MCF 10A (cell line): ENCODE measurements at regions of chr1 and their contacts with region 1.

Region 1: DNA sequence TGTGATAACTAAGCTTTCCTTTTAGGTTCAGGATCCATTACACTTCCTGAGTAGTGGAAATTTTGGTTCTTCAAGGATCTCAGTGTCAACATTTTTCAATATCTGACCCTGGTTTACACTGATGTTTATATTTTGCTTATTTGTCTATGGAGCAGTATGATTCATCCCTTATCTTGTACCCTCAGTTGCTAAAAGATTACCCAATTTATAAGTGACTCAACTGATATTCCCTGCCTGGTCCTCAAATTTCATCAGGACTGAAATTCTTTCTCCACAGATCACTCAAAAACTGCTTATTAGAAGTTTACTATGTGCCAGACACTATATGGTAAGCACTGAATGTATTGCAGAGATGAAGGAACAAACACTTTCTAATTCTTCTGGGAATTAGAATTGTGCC is 139.1 kb upstream of the CHRM3 start:
- DNase-seq: peak; percentile 66
- H3K4me3 Mint-ChIP-seq: no peak overlapping the region
- H3K27ac Mint-ChIP-seq: peak overlapping the region; percentile 14
- H3K4me1 Mint-ChIP-seq: peaks cover 14% of the 10 kb centered on the region
- H3K27me3 Mint-ChIP-seq: no peaks in the 10 kb centered on the region
- CTCF ChIP-seq: no peak

Region 2: DNA sequence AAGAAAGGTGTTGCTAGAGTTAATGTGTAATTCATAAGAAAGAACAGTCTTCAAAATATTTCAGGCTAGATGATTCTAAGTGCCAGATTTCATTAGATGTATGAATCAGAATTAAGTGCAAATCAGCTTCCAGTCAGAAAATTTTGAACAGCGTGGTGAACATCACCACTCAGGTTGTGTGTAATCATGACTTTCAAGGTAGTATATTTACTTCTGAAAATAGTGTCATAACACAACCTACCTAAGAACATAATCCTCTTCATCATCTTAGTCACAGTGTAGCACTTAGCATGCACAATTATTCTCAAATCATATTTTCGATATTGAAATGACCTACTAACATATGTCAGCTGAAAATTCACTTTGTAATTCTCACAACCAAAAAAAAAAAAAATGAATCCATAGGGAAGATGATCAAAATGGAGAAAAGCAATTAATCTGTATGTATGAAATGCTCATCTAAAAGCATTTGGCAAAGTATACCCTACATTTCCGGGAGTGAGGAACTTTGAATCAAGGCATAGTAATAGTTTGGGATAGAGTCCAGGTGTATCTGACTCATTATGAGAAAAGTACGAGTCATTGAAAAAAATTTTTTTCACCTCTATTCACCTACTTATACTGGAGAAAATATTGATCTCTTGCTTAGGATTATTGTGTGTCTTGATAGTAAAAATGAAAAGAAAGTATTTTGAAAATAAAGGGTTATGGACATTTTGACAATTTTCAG is 82.7 kb before region 1 on chr1:
- CTCF ChIA-PET with region 1: no interaction called
- POLR2A ChIA-PET with region 1: no interaction called
- intact Hi-C with region 1: no loop called
- DNase-seq: peak; percentile 84
- H3K4me3 Mint-ChIP-seq: no peak overlapping the region
- H3K27ac Mint-ChIP-seq: no peak overlapping the region
- H3K4me1 Mint-ChIP-seq: no peaks in the 10 kb centered on the region
- H3K27me3 Mint-ChIP-seq: no peaks in the 10 kb centered on the region
- CTCF ChIP-seq: no peak

Region 3: GRCh38 chr1:239221656-239222055 is 25.6 kb before region 1 on chr1:
- CTCF ChIA-PET with region 1: no interaction called
- POLR2A ChIA-PET with region 1: no interaction called
- intact Hi-C with region 1: loop called (anchors 1 kb)
- DNase-seq: no peak
- H3K4me3 Mint-ChIP-seq: no peak overlapping the region
- H3K27ac Mint-ChIP-seq: no peak overlapping the region
- H3K4me1 Mint-ChIP-seq: no peaks in the 10 kb centered on the region
- H3K27me3 Mint-ChIP-seq: no peaks in the 10 kb centered on the region
- CTCF ChIP-seq: no peak